AG04450 (cell line): ENCODE measurements at regions of chr6 and their contacts with region 1.

Region 1: DNA sequence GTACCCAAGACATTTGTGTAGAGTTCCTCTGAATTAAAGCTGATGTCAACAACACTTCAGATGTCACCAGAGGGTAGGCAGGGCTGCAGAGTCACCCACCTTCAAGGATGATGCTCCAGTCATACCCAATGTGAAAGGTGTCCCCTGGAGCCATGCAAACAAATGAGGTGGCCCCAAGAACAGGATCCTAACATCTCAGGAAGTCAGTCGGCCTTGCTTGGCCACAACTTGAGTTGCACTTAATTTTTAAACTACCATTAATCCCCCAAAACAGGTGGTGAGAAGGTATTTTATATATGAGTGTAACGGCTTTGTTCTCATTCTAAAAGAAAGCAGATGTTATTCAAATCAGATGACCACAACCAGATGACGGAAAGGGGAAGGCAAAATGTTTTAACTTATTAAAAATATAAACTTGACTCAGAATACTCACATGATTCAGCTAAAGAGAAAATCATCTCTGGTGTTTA is 21.1 kb upstream of the SERPINB1 start:
- DNase-seq: no peak
- H3K4me3 ChIP-seq: no peak overlapping the region
- H3K27ac ChIP-seq: no peak overlapping the region
- H3K27me3 ChIP-seq: no peaks in the 10 kb centered on the region
- CTCF ChIP-seq: no peak

Region 2: DNA sequence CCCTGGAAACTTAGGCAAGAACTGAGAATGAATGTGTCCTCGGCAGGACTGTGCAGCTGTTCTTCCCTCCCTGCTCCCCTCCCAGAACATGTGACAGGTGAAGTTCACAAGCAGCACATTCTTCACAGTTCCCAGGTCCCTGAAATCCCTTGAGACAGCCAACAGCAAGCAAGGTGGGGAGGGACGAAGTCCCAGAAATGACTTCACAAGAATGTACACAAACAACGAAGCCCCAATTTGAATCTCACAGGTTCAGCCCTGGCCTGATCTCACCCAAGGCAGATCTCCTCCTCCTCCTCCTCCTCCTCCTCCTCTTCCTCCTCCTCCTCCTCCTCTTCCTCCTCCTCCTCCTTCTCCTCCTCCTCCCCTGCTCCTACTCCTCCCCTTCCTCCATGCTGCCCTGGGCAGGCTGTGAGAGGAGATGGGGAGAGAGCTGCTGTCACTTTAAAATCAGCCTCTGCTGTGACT is 65.1 kb before region 1 on chr6:
- CTCF ChIA-PET with region 1: no interaction called
- POLR2A ChIA-PET with region 1: interaction called, 12 read pairs
- DNase-seq: no peak
- H3K4me3 ChIP-seq: no peak overlapping the region
- H3K27ac ChIP-seq: no peak overlapping the region
- H3K27me3 ChIP-seq: no peaks in the 10 kb centered on the region
- CTCF ChIP-seq: no peak

Region 3: DNA sequence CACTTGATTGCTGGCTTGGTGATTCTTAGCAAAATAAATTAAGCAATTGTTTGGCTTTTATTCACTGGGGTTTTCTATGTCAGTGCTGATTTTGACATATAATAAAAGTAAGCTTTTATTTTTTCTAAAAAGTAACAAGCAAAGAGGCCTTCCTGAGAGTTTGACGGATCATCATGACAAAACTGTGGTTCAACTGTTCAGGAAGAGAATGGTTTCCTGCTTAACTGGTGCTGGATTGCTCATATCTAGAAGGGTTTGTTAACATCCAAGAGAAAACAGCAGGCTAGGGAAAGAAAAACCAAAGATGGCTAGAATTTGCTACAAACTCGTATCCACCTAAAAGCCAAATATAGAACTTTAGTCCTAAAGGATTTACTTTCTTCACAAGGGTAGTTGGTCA is 42.3 kb before region 1 on chr6:
- CTCF ChIA-PET with region 1: no interaction called
- POLR2A ChIA-PET with region 1: no interaction called
- DNase-seq: no peak
- H3K4me3 ChIP-seq: no peak overlapping the region
- H3K27ac ChIP-seq: no peak overlapping the region
- H3K27me3 ChIP-seq: no peaks in the 10 kb centered on the region
- CTCF ChIP-seq: no peak

Region 4: DNA sequence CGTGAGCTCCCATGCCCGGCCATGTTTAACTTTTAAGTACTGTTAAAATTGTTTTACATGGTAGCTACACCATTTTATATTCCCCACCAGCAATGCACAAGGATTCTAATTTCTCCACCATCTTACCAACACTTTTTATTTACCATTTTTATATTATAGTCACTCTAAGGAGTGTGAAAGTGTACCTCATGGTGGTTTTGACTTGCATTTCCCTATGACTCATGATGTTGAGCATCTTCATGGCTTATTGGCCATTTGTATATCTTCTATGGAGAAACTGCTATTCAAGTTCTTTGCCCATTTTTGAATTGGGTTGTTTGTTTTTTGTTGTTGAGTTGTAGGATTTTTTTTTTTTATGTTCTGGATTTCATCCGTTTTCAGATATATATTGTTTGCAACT is 240.1 kb after region 1 on chr6:
- CTCF ChIA-PET with region 1: no interaction called
- POLR2A ChIA-PET with region 1: no interaction called
- DNase-seq: no peak
- H3K4me3 ChIP-seq: no peak overlapping the region
- H3K27ac ChIP-seq: no peak overlapping the region
- H3K27me3 ChIP-seq: no peaks in the 10 kb centered on the region
- CTCF ChIP-seq: no peak